HepG2 (cell line): ENCODE measurements at regions of chr5 and their contacts with region 1.

Region 1: DNA sequence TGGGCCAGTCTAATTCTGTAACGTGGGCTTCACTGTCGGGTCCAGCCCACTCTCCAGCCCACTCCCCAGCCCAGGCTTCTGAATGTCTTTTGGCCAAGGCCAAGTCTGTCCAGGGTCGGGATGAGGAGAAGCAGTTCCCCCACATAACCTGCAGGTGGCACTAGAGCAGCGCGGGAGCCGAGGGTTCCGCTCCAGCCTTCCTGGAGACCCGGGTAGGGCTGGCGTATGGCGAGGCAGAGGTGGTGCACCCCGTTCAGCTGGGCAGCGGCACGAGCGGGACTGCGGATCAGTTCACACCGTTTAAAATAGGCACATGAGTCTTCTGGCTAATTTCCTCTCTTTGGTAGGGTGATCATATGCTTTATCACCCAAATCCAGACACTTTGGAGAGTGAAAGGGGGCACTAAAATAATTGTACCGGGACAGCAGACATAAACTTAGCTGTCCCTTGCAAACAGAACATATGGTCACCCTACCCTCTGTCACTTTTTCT is 185.9 kb downstream of the MSX2 start:
- DNase-seq: peak; percentile 36
- ATAC-seq: peak; percentile 99
- H3K4me3 ChIP-seq: no peak overlapping the region
- H3K27ac ChIP-seq: no peak overlapping the region
- H3K4me1 ChIP-seq: peaks cover 4% of the 10 kb centered on the region; the same call in 1 of the 2 replicates
- H3K27me3 ChIP-seq: 0 out of 5 replicates have a peak, but pooled peaks cover 0 to 9% of the 10 kb centered on the region in 2 experiments
- CTCF ChIP-seq: peak; percentile 94
- EP300 ChIP-seq: no peak
- POLR2A ChIP-seq: no peak
- RAD21 ChIP-seq: peak; percentile 69

Region 2: DNA sequence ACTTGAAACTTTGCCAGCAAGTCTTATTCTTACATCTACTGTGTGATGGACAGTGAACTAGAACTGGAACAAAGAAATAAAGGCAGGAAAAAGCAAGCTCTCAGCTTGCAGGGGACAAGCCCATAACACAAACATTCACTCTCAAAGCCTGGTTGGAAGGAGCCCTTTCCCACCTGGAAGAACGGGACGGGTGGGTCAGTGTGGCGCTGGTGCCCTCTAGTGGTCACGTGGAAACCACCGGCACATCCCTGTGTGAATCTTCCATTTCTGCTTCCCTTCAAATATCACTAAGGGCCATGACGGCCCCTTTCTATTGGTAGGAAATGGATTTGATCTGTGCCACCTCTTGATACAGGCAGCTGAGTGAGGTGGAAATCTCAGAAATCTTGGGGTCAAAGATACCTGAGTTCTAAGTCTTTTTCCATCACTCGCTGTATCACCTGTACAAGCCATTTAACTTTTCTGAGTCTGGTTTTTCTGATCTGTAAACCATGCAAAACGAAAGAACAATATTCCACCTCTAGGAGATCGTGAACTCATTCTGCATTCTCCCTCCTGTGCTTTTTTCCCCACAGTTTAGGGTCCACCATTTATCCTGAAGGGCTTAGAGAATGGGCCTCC is 25.7 kb after region 1 on chr5:
- CTCF ChIA-PET with region 1: interaction called, 17 read pairs
- POLR2A ChIA-PET with region 1: no interaction called
- in situ Hi-C with region 1: no loop called
- intact Hi-C with region 1: loop called (anchors 2 kb)
- DNase-seq: peak; percentile 37
- ATAC-seq: peak; percentile 91
- H3K4me3 ChIP-seq: no peak overlapping the region
- H3K27ac ChIP-seq: no peak overlapping the region
- H3K4me1 ChIP-seq: no peaks in the 10 kb centered on the region
- H3K27me3 ChIP-seq: no peaks in the 10 kb centered on the region; a peak in 1 of 5 replicates
- CTCF ChIP-seq: peak; percentile 91
- EP300 ChIP-seq: no peak
- POLR2A ChIP-seq: no peak
- RAD21 ChIP-seq: peak; percentile 48; the same call in 1 of the 2 replicates

Region 3: DNA sequence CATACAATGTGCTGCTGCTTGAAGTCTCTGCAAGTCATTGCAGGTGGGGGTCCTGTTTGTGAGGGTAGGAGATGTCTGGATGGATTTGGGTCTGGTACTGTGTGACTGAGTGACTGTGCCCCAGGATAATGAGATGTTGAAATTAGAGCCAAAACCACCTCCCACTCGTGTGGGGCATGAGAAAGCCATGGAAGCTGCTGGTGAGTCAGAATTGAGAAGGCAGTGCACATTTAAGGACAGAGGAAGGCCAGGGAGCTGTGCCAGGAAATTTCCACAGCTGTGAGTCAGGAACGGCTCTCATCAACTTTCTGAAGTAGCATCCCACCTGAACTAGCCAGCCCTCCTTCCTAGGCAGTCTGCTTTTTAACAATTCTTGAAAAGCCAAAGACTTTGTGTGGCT is 303.9 kb after region 1 on chr5:
- CTCF ChIA-PET with region 1: no interaction called
- POLR2A ChIA-PET with region 1: no interaction called
- in situ Hi-C with region 1: no loop called
- intact Hi-C with region 1: no loop called
- DNase-seq: no peak
- ATAC-seq: no peak
- H3K4me3 ChIP-seq: no peak overlapping the region
- H3K27ac ChIP-seq: no peak overlapping the region
- H3K4me1 ChIP-seq: no peaks in the 10 kb centered on the region
- H3K27me3 ChIP-seq: peaks cover 2 to 11% of the 10 kb centered on the region in 2 experiments; a peak in 2 of 5 replicates
- CTCF ChIP-seq: no peak
- EP300 ChIP-seq: no peak
- POLR2A ChIP-seq: no peak
- RAD21 ChIP-seq: no peak

Region 4: GRCh38 chr5:175387144-175387543 is 476.9 kb after region 1 on chr5:
- CTCF ChIA-PET with region 1: no interaction called
- POLR2A ChIA-PET with region 1: no interaction called
- in situ Hi-C with region 1: no loop called
- intact Hi-C with region 1: no loop called
- DNase-seq: no peak
- ATAC-seq: no peak
- H3K4me3 ChIP-seq: no peak overlapping the region
- H3K27ac ChIP-seq: no peak overlapping the region
- H3K4me1 ChIP-seq: no peaks in the 10 kb centered on the region
- H3K27me3 ChIP-seq: no peaks in the 10 kb centered on the region; a peak in 1 of 5 replicates
- CTCF ChIP-seq: no peak
- EP300 ChIP-seq: no peak
- POLR2A ChIP-seq: no peak
- RAD21 ChIP-seq: no peak